Heart left ventricle (tissue), 16 donors: ENCODE measurements at regions of chr1 and their contacts with region 1.

Region 1: GRCh38 chr1:226083302-226084101 is 21.0 kb downstream of the H3-3A start:
- DNase-seq: peak; percentile 88 to 95 (median 91)
- ATAC-seq: peak; percentile 87 to 98 (median 97)
- H3K4me3 ChIP-seq: peak overlapping the region; percentile 47 to 81 (median 65)
- H3K27ac ChIP-seq: peak overlapping the region in 11 of 12 donors; percentile 9 to 79 (median 69)
- H3K4me1 ChIP-seq: peaks cover 0 to 15% (median 7%) of the 10 kb centered on the region in 12 donors
- H3K27me3 ChIP-seq: no peaks in the 10 kb centered on the region
- CTCF ChIP-seq: peak in 2 of 12 donors; percentile 11 to 35
- POLR2A ChIP-seq: peak in 1 of 2 donors; percentile 44

Region 2: DNA sequence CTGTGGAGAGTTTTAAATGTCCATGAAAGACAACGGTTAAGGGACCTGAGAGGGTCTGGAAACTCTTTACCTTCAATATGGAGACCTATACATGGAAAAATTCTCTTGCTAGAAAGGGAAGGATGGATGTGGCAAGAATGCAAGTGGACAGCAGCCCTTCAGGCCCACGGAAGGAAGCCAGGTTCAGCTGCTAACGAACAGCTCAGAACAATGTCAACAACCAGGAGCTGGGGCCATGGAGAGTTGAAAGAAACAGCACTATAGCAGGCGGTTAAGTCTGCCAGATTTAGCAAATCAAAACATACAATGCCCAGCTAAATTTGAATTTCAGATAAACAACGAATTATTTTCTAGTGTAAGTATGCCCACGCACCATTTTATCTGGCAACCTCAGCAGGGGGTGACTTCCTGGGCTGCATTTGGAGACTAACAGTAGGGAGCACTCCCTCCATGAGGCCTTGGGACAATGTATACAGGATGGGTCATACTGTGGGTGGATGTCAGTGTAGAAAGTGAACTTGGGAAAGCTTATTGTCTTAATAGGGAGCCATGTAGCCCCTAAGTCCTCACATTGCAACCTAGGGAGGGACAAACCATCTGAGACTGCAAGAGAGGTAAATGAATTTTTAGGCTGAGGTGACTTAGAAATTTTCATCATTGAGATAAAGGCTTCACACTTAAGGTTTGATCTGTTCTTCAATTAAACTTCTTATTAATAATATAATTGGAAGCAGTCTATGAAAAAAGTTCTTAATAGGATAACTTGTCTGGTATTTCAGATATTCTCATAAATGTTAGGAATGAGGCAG is 28.8 kb before region 1 on chr1:
- intact Hi-C with region 1: no loop called
- DNase-seq: no peak
- ATAC-seq: no peak
- H3K4me3 ChIP-seq: no peak overlapping the region
- H3K27ac ChIP-seq: no peak overlapping the region
- H3K4me1 ChIP-seq: peaks cover 0 to 5% (median 0%) of the 10 kb centered on the region in 12 donors
- H3K27me3 ChIP-seq: no peaks in the 10 kb centered on the region
- CTCF ChIP-seq: no peak
- POLR2A ChIP-seq: no peak

Region 3: DNA sequence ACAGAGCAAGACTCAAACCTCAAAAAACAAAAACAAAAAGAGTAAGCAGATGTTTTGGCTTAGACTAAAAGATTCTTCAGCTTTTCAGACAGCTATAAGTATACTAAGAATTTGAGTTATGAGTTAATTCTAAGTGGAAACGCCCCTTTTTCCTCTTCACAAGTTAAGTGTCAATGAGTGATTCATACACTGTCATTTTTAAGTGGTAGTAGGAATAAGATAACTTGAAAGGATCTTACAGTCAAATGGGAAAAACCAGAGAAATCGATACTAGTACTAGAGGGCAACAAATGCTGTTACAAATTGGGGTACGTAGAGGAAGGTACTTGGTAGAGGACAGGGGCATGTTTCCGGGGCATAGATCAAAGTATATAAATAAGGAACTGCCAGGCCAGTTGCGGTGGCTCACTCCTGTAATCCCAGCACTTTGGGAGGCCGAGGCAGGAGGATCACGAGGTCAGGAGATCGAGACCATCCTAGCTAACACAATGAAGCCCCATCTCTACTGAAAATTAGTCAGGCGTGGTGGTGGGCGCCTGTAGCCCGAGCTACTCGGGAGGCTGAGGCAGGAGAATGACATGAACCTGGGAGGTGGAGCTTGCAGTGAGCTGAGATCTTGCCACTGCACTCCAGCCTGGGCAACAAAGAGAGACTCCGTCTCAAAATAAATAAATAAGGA is 13.6 kb before region 1 on chr1:
- intact Hi-C with region 1: loop called in 1 of 10 experiments (anchors 2 kb)
- DNase-seq: no peak
- ATAC-seq: no peak
- H3K4me3 ChIP-seq: no peak overlapping the region
- H3K27ac ChIP-seq: no peak overlapping the region
- H3K4me1 ChIP-seq: peaks cover 3 to 63% (median 45%) of the 10 kb centered on the region in 12 donors
- H3K27me3 ChIP-seq: no peaks in the 10 kb centered on the region
- CTCF ChIP-seq: no peak
- POLR2A ChIP-seq: no peak

Region 4: DNA sequence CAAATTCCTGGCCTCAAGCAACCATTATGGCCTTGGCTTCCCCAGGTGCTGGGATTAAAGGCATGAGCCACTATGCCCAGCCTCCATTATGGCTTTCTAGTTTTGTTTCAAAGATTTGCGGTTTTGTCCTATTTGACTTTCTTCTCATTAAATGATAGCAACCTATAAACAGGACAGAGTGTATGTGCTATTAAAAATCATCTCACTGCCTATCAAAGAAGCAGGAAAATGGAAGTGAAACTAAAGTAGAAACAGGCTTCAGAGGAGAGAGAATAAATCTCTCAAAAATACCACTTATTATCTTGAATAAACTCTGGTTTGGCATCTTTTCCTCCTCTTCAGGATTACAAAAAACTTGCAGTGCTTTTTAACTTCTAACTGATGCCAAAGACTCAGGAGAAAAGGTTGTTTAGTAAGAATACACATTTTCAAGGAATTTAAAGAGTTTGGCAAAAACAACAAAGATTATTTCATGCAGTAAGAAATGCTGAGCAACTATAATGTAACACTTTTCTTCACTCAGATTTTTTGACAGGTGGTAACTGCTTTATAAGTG is 74.3 kb after region 1 on chr1:
- intact Hi-C with region 1: no loop called
- DNase-seq: no peak
- ATAC-seq: no peak
- H3K4me3 ChIP-seq: no peak overlapping the region
- H3K27ac ChIP-seq: peak overlapping the region in 1 of 12 donors; percentile 33
- H3K4me1 ChIP-seq: peaks cover 0 to 16% (median 0%) of the 10 kb centered on the region in 12 donors
- H3K27me3 ChIP-seq: no peaks in the 10 kb centered on the region
- CTCF ChIP-seq: no peak
- POLR2A ChIP-seq: no peak